ENCODE measurements at regions of chr12 and their contacts with region 1.

Region 1: GRCh38 chr12:3034067-3034750 is 43.0 kb upstream of the TSPAN9 start:
- DNase-seq: peak; percentile 77 to 85 (median 78)
- ATAC-seq: peak; percentile 76
- H3K4me3 ChIP-seq: no peak overlapping the region
- H3K27ac ChIP-seq: no peak overlapping the region
- H3K4me1 ChIP-seq: peaks cover 32% of the 10 kb centered on the region
- H3K27me3 ChIP-seq: no peaks in the 10 kb centered on the region
- CTCF ChIP-seq: peak; percentile 42 to 80 (median 73)
- POLR2A ChIP-seq: no peak

Region 2: GRCh38 chr12:2862876-2863275 is 171.3 kb before region 1 on chr12:
- intact Hi-C with region 1: loop called (anchors 10 kb)
- DNase-seq: no peak
- ATAC-seq: no peak
- H3K4me3 ChIP-seq: no peak overlapping the region
- H3K27ac ChIP-seq: no peak overlapping the region
- H3K4me1 ChIP-seq: no peaks in the 10 kb centered on the region
- H3K27me3 ChIP-seq: no peaks in the 10 kb centered on the region
- CTCF ChIP-seq: no peak
- POLR2A ChIP-seq: no peak

Region 3: GRCh38 chr12:2959505-2960389 is 74.5 kb before region 1 on chr12:
- intact Hi-C with region 1: loop called (anchors 10 kb)
- DNase-seq: peak; percentile 60 to 63 (median 62)
- ATAC-seq: peak; percentile 47
- H3K4me3 ChIP-seq: peak overlapping the region; percentile 22 to 36
- H3K27ac ChIP-seq: peak overlapping the region; percentile 90 to 95 (median 93)
- H3K4me1 ChIP-seq: peaks cover 53% of the 10 kb centered on the region
- H3K27me3 ChIP-seq: no peaks in the 10 kb centered on the region
- CTCF ChIP-seq: no peak
- POLR2A ChIP-seq: peak; percentile 31 to 59 (median 58)

Region 4: GRCh38 chr12:3261782-3262359 is 227.7 kb after region 1 on chr12:
- intact Hi-C with region 1: no loop called
- DNase-seq: no peak
- ATAC-seq: peak; percentile 30
- H3K4me3 ChIP-seq: no peak overlapping the region
- H3K27ac ChIP-seq: no peak overlapping the region
- H3K4me1 ChIP-seq: no peaks in the 10 kb centered on the region
- H3K27me3 ChIP-seq: no peaks in the 10 kb centered on the region
- CTCF ChIP-seq: no peak
- POLR2A ChIP-seq: no peak